CD14-positive monocyte (primary cell): ENCODE measurements at regions of chr19 and their contacts with region 1.

Region 1: DNA sequence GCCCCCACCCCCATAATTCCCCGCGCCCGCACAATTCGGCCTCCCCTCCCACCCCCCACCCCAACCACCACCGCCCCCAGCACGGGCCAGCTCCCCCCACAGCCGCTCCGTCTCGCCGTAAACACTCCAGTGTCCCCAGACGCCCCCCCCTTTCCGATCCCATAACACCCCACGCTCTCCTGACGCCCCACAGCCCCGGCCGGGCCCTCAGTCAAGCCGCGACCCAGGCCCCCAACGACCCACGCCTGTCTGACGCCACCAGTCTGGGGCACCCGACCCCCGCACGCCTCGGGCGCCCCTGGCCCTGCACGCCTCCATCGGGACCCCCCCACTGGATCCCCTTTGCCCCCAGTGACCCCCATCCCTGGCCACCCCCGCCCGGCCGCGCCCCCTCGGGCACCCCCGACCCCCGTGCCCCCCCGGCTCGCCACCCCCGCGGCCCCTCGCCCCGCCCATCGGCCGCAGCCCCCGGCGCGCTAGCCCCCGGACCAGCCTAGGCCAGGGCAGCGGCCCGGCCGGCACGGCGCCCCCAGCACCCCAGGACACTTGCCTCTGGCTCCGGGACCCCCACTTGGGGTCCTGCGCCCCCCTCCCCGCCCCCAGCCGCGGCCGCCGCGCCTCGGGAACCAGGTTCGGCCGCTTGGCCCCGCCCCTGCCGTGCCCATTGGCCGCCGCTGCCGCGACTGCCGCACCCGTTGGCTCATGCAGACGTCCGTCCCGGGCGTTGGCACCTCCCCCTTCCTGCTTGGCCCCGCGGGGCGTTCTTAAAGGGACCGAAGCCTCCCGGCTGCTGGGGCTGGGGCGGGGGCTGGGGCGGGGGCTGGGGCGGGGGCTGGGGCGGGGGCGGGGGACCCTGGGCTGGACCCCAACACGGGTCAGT is at the start of gene FKBP8:
- DNase-seq: peak; percentile 84 to 89 (median 88)
- H3K4me3 ChIP-seq: peak within 1 kb of the TSS; percentile 64 to 80 (median 65)
- H3K4me3 Mint-ChIP-seq: peak within 1 kb of the TSS; percentile 91
- H3K27ac ChIP-seq: peak within 1 kb of the TSS; percentile 72 to 82
- H3K27ac Mint-ChIP-seq: peak within 1 kb of the TSS; percentile 93 to 98 (median 95)
- H3K4me1 ChIP-seq: peaks cover 21 to 26% of the 10 kb centered on the region in 2 donors
- H3K4me1 Mint-ChIP-seq: peaks cover 30% of the 10 kb centered on the region
- H3K27me3 ChIP-seq: no peaks in the 10 kb centered on the region
- H3K27me3 Mint-ChIP-seq: peaks cover 0 to 5% (median 0%) of the 10 kb centered on the region in 3 donors
- CTCF ChIP-seq: no peak
- polyA plus RNA-seq, gene FKBP8: 78.0 to 159 (median 81.2) TPM

Region 2: GRCh38 chr19:18557474-18558201 is 14.5 kb after region 1 on chr19 and contains the start of gene KXD1:
- intact Hi-C with region 1: loop called in 1 of 2 experiments (anchors 1 kb)
- DNase-seq: peak; percentile 99 to 100 (median 100)
- H3K4me3 ChIP-seq: peak within 1 kb of the TSS; percentile 75 to 96 (median 95)
- H3K4me3 Mint-ChIP-seq: peak within 1 kb of the TSS; percentile 88 to 90
- H3K27ac ChIP-seq: peak within 1 kb of the TSS; percentile 69 to 97
- H3K27ac Mint-ChIP-seq: peak within 1 kb of the TSS; percentile 93 to 97 (median 95)
- H3K4me1 ChIP-seq: peaks cover 14 to 17% of the 10 kb centered on the region in 2 donors
- H3K4me1 Mint-ChIP-seq: peaks cover 16% of the 10 kb centered on the region
- H3K27me3 ChIP-seq: no peaks in the 10 kb centered on the region
- H3K27me3 Mint-ChIP-seq: peaks cover 0 to 3% (median 0%) of the 10 kb centered on the region in 3 donors
- CTCF ChIP-seq: no peak
- polyA plus RNA-seq, gene KXD1: 74.4 to 194 (median 87.9) TPM

Region 3: GRCh38 chr19:18580311-18580710 is 37.1 kb after region 1 on chr19:
- intact Hi-C with region 1: loop called (anchors 5 kb)
- DNase-seq: no peak
- H3K4me3 ChIP-seq: no peak overlapping the region
- H3K4me3 Mint-ChIP-seq: no peak overlapping the region
- H3K27ac ChIP-seq: no peak overlapping the region
- H3K27ac Mint-ChIP-seq: no peak overlapping the region
- H3K4me1 ChIP-seq: peaks cover 1 to 2% of the 10 kb centered on the region in 2 donors
- H3K4me1 Mint-ChIP-seq: peaks cover 1% of the 10 kb centered on the region
- H3K27me3 ChIP-seq: no peaks in the 10 kb centered on the region
- H3K27me3 Mint-ChIP-seq: peaks cover 0 to 2% (median 0%) of the 10 kb centered on the region in 3 donors
- CTCF ChIP-seq: no peak

Region 4: GRCh38 chr19:18649371-18650020 is 106.3 kb after region 1 on chr19:
- intact Hi-C with region 1: no loop called
- DNase-seq: peak in 2 of 3 donors; percentile 18 to 25
- H3K4me3 ChIP-seq: peak overlapping the region in 1 of 3 experiments; percentile 65
- H3K4me3 Mint-ChIP-seq: peak overlapping the region; percentile 72 to 86
- H3K27ac ChIP-seq: no peak overlapping the region
- H3K27ac Mint-ChIP-seq: peak overlapping the region in 3 of 7 donors; percentile 33 to 63 (median 41)
- H3K4me1 ChIP-seq: peaks cover 22 to 29% of the 10 kb centered on the region in 2 donors
- H3K4me1 Mint-ChIP-seq: peaks cover 32% of the 10 kb centered on the region
- H3K27me3 ChIP-seq: no peaks in the 10 kb centered on the region
- H3K27me3 Mint-ChIP-seq: peaks cover 11 to 20% (median 14%) of the 10 kb centered on the region in 3 donors
- CTCF ChIP-seq: no peak